ENCODE measurements at regions of chr3 and their contacts with region 1.

Region 1: GRCh38 chr3:71583566-71584449 is at the start of gene FOXP1:
- DNase-seq: peak; percentile 61 to 82 (median 71)
- H3K4me3 ChIP-seq: peak within 1 kb of the TSS; percentile 68 to 93 (median 83)
- H3K27ac ChIP-seq: peak within 1 kb of the TSS; percentile 88 to 100 (median 98)
- H3K27me3 ChIP-seq: no peaks in the 10 kb centered on the region
- CTCF ChIP-seq: peak in 3 of 56 donors; percentile 4 to 33 (median 24)
- total RNA-seq, gene FOXP1: 84.2 to 160 (median 118) TPM

Region 2: DNA sequence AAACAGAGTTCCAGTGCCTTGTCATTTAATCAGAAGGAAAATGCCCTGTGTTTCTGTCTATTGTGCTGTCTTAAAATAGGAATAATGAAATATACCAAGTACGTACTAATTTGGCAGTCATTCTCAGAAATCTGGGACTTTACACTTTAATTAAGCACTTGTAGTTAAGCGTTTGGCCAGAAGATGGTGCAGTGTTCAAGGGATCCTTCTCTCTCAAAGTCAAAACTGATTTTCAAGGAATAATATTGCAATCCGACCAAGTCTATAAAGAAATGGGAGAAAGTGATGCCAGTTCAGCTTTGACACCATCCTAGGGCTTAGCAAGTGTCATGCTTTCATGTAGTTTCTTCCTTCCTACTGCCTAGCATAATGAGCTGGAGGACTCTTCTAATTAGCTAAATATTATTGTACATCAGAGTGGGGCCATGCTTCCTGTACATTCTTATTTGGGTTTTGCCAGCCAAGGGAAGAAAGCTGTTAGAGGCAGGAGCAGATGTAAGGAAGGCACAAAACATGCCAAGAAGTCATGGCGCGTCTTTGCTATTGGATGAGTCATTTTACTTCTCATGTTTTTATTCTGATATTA is 1519.5 kb before region 1 on chr3:
- intact Hi-C with region 1: loop called in 1 of 2 experiments (anchors 10 kb)
- DNase-seq: peak in 1 of 10 donors; percentile 20
- H3K4me3 ChIP-seq: no peak overlapping the region
- H3K27ac ChIP-seq: peak overlapping the region in 27 of 59 donors; percentile 1 to 62 (median 32)
- H3K27me3 ChIP-seq: no peaks in the 10 kb centered on the region
- CTCF ChIP-seq: peak; percentile 59 to 89 (median 80)

Region 3: GRCh38 chr3:70342149-70342548 is 1241.7 kb before region 1 on chr3:
- intact Hi-C with region 1: no loop called
- DNase-seq: no peak
- H3K4me3 ChIP-seq: no peak overlapping the region
- H3K27ac ChIP-seq: no peak overlapping the region
- H3K27me3 ChIP-seq: peaks cover 0 to 3% (median 0%) of the 10 kb centered on the region in 45 donors
- CTCF ChIP-seq: no peak

Region 4: GRCh38 chr3:71016178-71016845 is 567.5 kb before region 1 on chr3:
- intact Hi-C with region 1: loop called (anchors 5 kb)
- DNase-seq: no peak
- H3K4me3 ChIP-seq: peak overlapping the region in 9 of 59 donors; percentile 3 to 40 (median 26)
- H3K27ac ChIP-seq: peak overlapping the region in 55 of 59 donors; percentile 3 to 91 (median 73)
- H3K27me3 ChIP-seq: no peaks in the 10 kb centered on the region
- CTCF ChIP-seq: no peak

Region 5: GRCh38 chr3:71069797-71070196 is 514.0 kb before region 1 on chr3:
- intact Hi-C with region 1: loop called (anchors 2 to 5 kb)
- DNase-seq: peak in 7 of 10 donors; percentile 35 to 72 (median 62)
- H3K4me3 ChIP-seq: no peak overlapping the region
- H3K27ac ChIP-seq: peak overlapping the region in 34 of 59 donors; percentile 8 to 78 (median 52)
- H3K27me3 ChIP-seq: no peaks in the 10 kb centered on the region
- CTCF ChIP-seq: peak; percentile 23 to 88 (median 61)

Region 6: GRCh38 chr3:71305231-71306206 is 278.3 kb before region 1 on chr3:
- intact Hi-C with region 1: loop called (anchors 2 to 5 kb)
- DNase-seq: peak in 1 of 10 donors; percentile 44
- H3K4me3 ChIP-seq: peak overlapping the region; percentile 18 to 72 (median 54)
- H3K27ac ChIP-seq: peak overlapping the region; percentile 19 to 96 (median 87)
- H3K27me3 ChIP-seq: no peaks in the 10 kb centered on the region
- CTCF ChIP-seq: peak in 2 of 56 donors; percentile 3 to 12

Region 7: GRCh38 chr3:71369701-71370391 is 214.0 kb before region 1 on chr3:
- intact Hi-C with region 1: no loop called
- DNase-seq: no peak
- H3K4me3 ChIP-seq: no peak overlapping the region
- H3K27ac ChIP-seq: no peak overlapping the region
- H3K27me3 ChIP-seq: no peaks in the 10 kb centered on the region
- CTCF ChIP-seq: no peak

Region 8: DNA sequence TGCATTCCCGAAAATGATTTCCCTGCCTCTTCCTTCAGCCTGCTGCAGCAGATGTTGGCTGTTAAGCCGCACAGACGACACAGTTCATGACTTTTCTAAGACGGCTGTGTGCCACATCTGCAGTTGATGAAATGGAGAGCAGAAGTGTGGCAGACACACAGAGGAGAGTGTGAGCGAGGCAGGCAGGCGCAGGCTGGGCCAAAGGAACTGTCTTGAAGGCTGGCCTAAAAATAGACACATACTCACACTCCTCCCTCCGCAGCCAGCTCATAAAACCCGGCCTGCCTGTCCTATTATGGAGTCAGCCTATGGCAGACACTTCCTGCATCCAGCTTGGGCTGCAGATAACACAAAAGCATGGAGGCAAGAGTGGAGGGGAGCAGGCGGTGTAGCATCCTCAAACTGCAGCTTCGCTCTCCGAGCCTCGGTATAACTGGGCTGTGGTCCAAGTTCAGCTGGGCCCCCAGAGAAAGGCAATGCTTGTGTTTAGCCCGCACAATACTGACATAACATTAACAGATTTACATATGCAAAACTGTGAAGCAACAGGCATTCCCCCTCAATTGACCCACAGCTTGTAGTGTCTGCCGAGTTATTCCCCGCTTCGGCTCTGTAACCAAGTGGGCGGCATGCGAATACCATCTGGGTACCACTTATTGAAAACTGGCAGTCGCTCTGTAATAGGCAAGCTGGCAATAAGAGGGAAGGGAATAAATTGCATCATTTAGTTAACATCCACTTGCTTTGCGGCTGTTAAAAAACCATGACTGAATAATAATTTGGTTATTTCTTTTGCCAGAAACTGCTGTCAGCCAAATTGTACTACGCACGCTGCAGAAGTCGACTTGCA is 41.1 kb before region 1 on chr3:
- intact Hi-C with region 1: loop called in 1 of 2 experiments (anchors 2 kb)
- DNase-seq: peak; percentile 43 to 89 (median 78)
- H3K4me3 ChIP-seq: peak overlapping the region in 58 of 59 donors; percentile 4 to 66 (median 42)
- H3K27ac ChIP-seq: peak overlapping the region in 53 of 59 donors; percentile 1 to 78 (median 52)
- H3K27me3 ChIP-seq: no peaks in the 10 kb centered on the region
- CTCF ChIP-seq: peak in 1 of 56 donors; percentile 11

Region 9: DNA sequence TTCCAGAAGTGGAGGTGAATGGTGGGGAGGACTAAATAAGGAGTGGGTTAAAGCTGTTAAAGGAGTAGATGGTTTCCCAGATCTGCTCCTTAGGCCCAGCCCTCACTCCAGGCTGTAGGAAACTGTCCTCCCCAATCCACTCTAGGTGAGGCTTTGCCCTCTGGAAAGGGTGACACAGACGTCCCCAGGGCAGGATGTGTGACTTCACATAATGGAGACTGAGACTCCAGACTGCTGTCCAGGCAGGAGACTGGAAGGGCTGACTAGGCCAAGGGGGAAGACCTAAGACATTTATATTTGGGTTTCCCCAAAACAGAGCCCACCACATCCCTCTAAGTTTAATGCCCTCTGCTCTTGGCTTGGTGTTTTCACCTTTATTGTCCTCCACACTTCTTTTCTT is 775.9 kb after region 1 on chr3:
- intact Hi-C with region 1: no loop called
- DNase-seq: no peak
- H3K4me3 ChIP-seq: no peak overlapping the region
- H3K27ac ChIP-seq: no peak overlapping the region
- H3K27me3 ChIP-seq: no peaks in the 10 kb centered on the region
- CTCF ChIP-seq: no peak